Dendritic cell treated with granulocyte-macrophage colony-stimulating factor and Interleukin-4, amounts not matched to agents 40 ng/mL and 50 ng/mL, for 4 days (primary cell): ENCODE measurements at regions of chr1 and their contacts with region 1.

Region 1: DNA sequence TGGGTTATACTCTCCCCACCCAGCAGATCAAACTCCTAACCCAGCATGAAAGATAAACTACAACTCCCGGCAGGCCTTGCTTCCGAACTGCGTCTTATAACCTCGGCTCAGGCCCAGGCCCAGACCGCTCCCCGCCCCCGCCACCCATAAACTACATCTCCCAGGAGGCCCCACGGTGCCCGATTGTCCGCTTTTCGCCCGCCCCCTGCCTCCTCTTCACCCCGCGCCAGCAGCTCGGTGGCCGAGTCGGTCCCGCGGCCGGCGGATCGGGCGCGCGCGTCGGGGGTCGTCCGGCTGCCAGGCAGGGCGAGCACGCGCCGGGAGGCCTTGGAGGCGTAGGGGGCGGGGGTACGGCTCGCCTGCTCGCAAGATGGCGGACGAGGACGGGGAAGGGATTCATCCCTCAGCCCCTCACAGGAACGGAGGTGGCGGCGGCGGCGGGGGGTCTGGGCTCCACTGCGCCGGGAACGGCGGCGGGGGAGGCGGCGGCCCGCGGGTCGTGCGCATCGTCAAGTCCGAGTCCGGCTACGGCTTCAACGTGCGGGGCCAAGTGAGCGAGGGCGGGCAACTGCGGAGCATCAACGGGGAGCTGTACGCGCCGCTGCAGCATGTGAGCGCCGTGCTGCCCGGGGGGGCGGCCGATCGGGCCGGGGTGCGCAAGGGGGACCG is at the start of gene SNX27:
- H3K4me3 Mint-ChIP-seq: peak within 1 kb of the TSS; percentile 97
- H3K27ac Mint-ChIP-seq: peak within 1 kb of the TSS; percentile 92
- H3K4me1 Mint-ChIP-seq: peaks cover 51% of the 10 kb centered on the region
- H3K27me3 Mint-ChIP-seq: peaks cover 2% of the 10 kb centered on the region

Region 2: GRCh38 chr1:151539990-151540981 is 71.7 kb before region 1 on chr1 and contains the start of gene TUFT1:
- intact Hi-C with region 1: loop called (anchors 2 kb)
- H3K4me3 Mint-ChIP-seq: peak within 1 kb of the TSS; percentile 93
- H3K27ac Mint-ChIP-seq: peak within 1 kb of the TSS; percentile 86
- H3K4me1 Mint-ChIP-seq: peaks cover 38% of the 10 kb centered on the region
- H3K27me3 Mint-ChIP-seq: peaks cover 38% of the 10 kb centered on the region

Region 3: GRCh38 chr1:151574545-151575529 is 37.1 kb before region 1 on chr1:
- intact Hi-C with region 1: no loop called
- H3K4me3 Mint-ChIP-seq: no peak overlapping the region
- H3K27ac Mint-ChIP-seq: no peak overlapping the region
- H3K4me1 Mint-ChIP-seq: peaks cover 12% of the 10 kb centered on the region
- H3K27me3 Mint-ChIP-seq: no peaks in the 10 kb centered on the region

Region 4: GRCh38 chr1:151661751-151662150 is 49.8 kb after region 1 on chr1:
- intact Hi-C with region 1: loop called (anchors 10 kb)
- H3K4me3 Mint-ChIP-seq: no peak overlapping the region
- H3K27ac Mint-ChIP-seq: peak overlapping the region; percentile 35
- H3K4me1 Mint-ChIP-seq: peaks cover 29% of the 10 kb centered on the region
- H3K27me3 Mint-ChIP-seq: no peaks in the 10 kb centered on the region